ENCODE measurements at regions of chr9 and their contacts with region 1.

Region 1: GRCh38 chr9:5628530-5629311 is at the start of gene RIC1:
- DNase-seq: peak; percentile 94
- ATAC-seq: peak; percentile 81
- H3K4me3 Mint-ChIP-seq: peak within 1 kb of the TSS; percentile 96
- H3K27ac Mint-ChIP-seq: peak within 1 kb of the TSS; percentile 99
- H3K4me1 Mint-ChIP-seq: peaks cover 61% of the 10 kb centered on the region
- H3K27me3 Mint-ChIP-seq: no peaks in the 10 kb centered on the region
- total RNA-seq, gene RIC1: 13.6 to 17.1 TPM

Region 2: DNA sequence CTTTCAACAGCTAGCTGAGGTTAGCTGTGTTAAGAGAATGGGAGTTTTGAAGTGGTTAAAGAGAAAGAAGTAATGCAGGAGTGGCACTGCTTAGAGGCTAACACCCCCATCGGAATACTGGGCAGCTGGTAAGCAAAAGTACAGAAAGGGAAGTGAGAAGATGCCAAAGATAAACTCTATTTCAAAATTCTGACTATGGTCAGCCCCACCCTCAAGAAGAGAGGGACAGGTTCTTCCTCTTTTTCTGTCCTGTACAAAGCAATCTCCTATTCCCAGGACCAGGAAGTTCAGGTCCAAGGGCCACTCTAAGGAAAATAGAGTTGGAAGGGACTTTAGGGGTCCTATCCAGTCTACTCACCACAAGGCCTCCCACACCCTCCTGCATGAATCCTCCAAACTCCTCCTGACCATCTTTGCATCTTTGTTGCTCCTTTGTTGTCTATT is 689.6 kb before region 1 on chr9:
- CTCF ChIA-PET with region 1: no interaction called
- POLR2A ChIA-PET with region 1: no interaction called
- intact Hi-C with region 1: loop called in 1 of 2 experiments (anchors 5 kb)
- DNase-seq: no peak
- ATAC-seq: peak; percentile 34
- H3K4me3 Mint-ChIP-seq: no peak overlapping the region
- H3K27ac Mint-ChIP-seq: peak overlapping the region; percentile 72
- H3K4me1 Mint-ChIP-seq: peaks cover 74% of the 10 kb centered on the region
- H3K27me3 Mint-ChIP-seq: no peaks in the 10 kb centered on the region

Region 3: GRCh38 chr9:5450359-5451091 is 178.2 kb before region 1 on chr9 and contains the start of gene CD274:
- CTCF ChIA-PET with region 1: interaction called, 3 read pairs
- POLR2A ChIA-PET with region 1: interaction called, 3 read pairs
- intact Hi-C with region 1: loop called in 1 of 2 experiments (anchors 2 kb)
- DNase-seq: peak; percentile 94
- ATAC-seq: peak; percentile 66
- H3K4me3 Mint-ChIP-seq: peak within 1 kb of the TSS; percentile 98
- H3K27ac Mint-ChIP-seq: peak within 1 kb of the TSS; percentile 90
- H3K4me1 Mint-ChIP-seq: peaks cover 77% of the 10 kb centered on the region
- H3K27me3 Mint-ChIP-seq: no peaks in the 10 kb centered on the region
- total RNA-seq, gene CD274: 25.0 to 30.1 TPM

Region 4: DNA sequence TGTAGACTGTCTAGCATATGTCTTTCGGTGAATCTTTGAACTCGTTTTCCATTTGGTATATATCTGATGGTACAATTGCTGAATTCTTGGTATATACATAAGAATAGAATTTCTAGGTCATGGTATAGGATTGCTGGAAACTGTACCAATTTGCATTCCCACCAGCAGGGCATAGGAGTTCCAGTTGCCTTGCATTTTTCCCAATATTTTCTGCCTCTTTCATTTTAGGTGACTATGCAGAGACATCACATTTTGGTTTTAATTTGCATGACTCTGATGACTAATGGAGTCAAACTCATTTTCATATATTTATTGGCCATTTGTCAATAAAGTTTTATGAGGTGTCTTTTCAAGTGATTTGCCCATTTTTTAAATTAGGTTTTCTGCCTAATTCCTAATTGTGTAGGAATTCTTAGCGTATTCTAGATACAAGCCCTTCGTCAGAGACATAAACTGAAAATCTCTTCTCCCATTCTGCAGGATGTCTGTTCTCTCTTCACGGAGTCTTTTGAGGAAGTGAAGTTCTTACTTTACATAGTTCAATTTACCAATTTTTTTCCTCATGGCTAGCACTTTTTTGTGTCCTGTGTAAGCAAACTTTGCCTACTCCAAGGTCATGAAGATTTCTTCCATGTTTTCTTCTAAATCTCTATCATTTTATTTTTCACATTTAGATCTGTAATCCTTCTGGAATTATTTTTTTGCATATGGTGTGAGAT is 147.2 kb before region 1 on chr9:
- CTCF ChIA-PET with region 1: no interaction called
- POLR2A ChIA-PET with region 1: no interaction called
- intact Hi-C with region 1: no loop called
- DNase-seq: no peak
- ATAC-seq: no peak
- H3K4me3 Mint-ChIP-seq: no peak overlapping the region
- H3K27ac Mint-ChIP-seq: no peak overlapping the region
- H3K4me1 Mint-ChIP-seq: peaks cover 17% of the 10 kb centered on the region
- H3K27me3 Mint-ChIP-seq: peaks cover 3% of the 10 kb centered on the region

Region 5: DNA sequence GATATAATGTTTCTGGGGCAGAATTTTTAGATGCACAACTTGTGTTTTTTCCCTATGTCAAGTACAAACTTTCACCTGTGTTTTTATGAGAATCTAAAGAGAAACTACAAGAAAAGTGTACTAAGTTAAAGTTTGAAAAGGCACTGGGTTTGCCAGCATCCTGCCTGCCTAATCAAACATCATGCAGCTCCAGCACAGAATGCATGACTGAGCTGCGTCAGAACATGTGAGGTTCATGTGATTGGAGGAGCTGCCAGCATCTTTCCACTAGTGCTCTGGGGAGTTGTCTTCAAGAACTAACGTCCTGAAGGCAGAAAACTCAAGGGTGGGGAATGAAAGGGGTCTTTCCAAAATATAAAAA is 45.9 kb before region 1 on chr9:
- CTCF ChIA-PET with region 1: interaction called, 4 read pairs
- POLR2A ChIA-PET with region 1: no interaction called
- intact Hi-C with region 1: loop called in 1 of 2 experiments (anchors 2 kb)
- DNase-seq: peak; percentile 69
- ATAC-seq: peak; percentile 42
- H3K4me3 Mint-ChIP-seq: no peak overlapping the region
- H3K27ac Mint-ChIP-seq: peak overlapping the region; percentile 85
- H3K4me1 Mint-ChIP-seq: peaks cover 74% of the 10 kb centered on the region
- H3K27me3 Mint-ChIP-seq: no peaks in the 10 kb centered on the region

Region 6: GRCh38 chr9:5764130-5764868 is 135.6 kb after region 1 on chr9:
- CTCF ChIA-PET with region 1: no interaction called
- POLR2A ChIA-PET with region 1: no interaction called
- intact Hi-C with region 1: loop called (anchors 2 to 10 kb)
- DNase-seq: peak; percentile 31
- ATAC-seq: peak; percentile 65
- H3K4me3 Mint-ChIP-seq: no peak overlapping the region
- H3K27ac Mint-ChIP-seq: peak overlapping the region; percentile 77
- H3K4me1 Mint-ChIP-seq: peaks cover 62% of the 10 kb centered on the region
- H3K27me3 Mint-ChIP-seq: no peaks in the 10 kb centered on the region

Region 7: GRCh38 chr9:6008169-6008979 is 379.7 kb after region 1 on chr9:
- CTCF ChIA-PET with region 1: no interaction called
- POLR2A ChIA-PET with region 1: no interaction called
- intact Hi-C with region 1: loop called (anchors 1 to 10 kb)
- DNase-seq: peak; percentile 96
- ATAC-seq: peak; percentile 77
- H3K4me3 Mint-ChIP-seq: peak overlapping the region; percentile 88
- H3K27ac Mint-ChIP-seq: peak overlapping the region; percentile 84
- H3K4me1 Mint-ChIP-seq: peaks cover 61% of the 10 kb centered on the region
- H3K27me3 Mint-ChIP-seq: no peaks in the 10 kb centered on the region

Measured in activated CD4-positive, alpha-beta T cell treated with anti-CD3 and anti-CD28 coated beads for 36 hours (primary cell).